ENCODE measurements at regions of chr11 and their contacts with region 1.

Region 1: DNA sequence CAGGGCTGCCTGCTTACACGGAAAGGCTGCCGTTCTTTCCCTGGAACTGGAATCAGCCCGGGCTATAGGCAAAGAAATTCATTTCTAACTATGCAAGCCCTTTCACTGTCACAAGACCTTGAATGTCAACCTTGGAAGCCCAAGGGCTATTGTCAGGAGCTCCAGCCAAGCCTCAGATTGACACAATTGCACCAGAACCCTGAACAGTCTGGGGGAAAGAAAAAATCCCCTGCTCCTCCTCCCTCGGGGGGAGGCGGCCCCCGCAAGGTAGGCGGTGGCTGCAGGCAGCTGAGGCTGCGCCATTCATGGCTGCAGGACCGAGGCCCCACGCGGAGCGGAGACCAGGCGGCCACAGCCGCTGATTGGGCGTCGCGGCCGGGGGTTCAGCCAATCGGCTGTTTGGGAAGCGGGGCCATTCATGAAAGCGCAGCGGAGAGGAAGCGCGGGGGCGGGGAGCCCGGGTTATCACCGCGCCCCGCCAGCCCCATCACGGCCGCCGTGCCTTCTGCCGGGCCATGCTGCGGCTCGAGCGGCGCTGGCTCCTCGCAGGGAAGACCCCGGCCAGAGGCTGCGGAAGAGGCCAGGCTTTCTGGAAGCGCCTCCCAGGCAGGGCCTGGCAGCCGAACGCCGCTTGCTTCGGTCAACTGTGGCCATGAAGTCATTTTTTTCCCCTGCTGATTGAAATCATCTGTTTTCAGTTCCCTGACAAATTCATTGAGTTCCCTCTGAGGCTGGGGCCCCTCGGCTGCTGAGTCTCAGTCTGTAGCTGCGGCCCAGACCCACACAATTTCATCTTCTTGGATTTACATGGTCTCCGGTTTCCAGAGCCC is 38.1 kb upstream of the LINC01488 start:
- DNase-seq: peak; percentile 88
- ATAC-seq: peak; percentile 89
- H3K4me3 Mint-ChIP-seq: peak overlapping the region; percentile 48
- H3K27ac Mint-ChIP-seq: peak overlapping the region; percentile 14
- H3K4me1 Mint-ChIP-seq: peaks cover 16% of the 10 kb centered on the region
- H3K27me3 Mint-ChIP-seq: peaks cover 13% of the 10 kb centered on the region

Region 2: GRCh38 chr11:69101115-69101791 is 342.1 kb before region 1 on chr11:
- CTCF ChIA-PET with region 1: no interaction called
- POLR2A ChIA-PET with region 1: no interaction called
- intact Hi-C with region 1: loop called in 1 of 2 experiments (anchors 1 kb)
- DNase-seq: peak; percentile 85
- ATAC-seq: peak; percentile 93
- H3K4me3 Mint-ChIP-seq: no peak overlapping the region
- H3K27ac Mint-ChIP-seq: no peak overlapping the region
- H3K4me1 Mint-ChIP-seq: peaks cover 2% of the 10 kb centered on the region
- H3K27me3 Mint-ChIP-seq: no peaks in the 10 kb centered on the region

Region 3: GRCh38 chr11:69145062-69145405 is 298.3 kb before region 1 on chr11:
- CTCF ChIA-PET with region 1: no interaction called
- POLR2A ChIA-PET with region 1: no interaction called
- intact Hi-C with region 1: no loop called
- DNase-seq: no peak
- ATAC-seq: no peak
- H3K4me3 Mint-ChIP-seq: no peak overlapping the region
- H3K27ac Mint-ChIP-seq: peak overlapping the region; percentile 69
- H3K4me1 Mint-ChIP-seq: peaks cover 17% of the 10 kb centered on the region
- H3K27me3 Mint-ChIP-seq: peaks cover 2% of the 10 kb centered on the region

Region 4: DNA sequence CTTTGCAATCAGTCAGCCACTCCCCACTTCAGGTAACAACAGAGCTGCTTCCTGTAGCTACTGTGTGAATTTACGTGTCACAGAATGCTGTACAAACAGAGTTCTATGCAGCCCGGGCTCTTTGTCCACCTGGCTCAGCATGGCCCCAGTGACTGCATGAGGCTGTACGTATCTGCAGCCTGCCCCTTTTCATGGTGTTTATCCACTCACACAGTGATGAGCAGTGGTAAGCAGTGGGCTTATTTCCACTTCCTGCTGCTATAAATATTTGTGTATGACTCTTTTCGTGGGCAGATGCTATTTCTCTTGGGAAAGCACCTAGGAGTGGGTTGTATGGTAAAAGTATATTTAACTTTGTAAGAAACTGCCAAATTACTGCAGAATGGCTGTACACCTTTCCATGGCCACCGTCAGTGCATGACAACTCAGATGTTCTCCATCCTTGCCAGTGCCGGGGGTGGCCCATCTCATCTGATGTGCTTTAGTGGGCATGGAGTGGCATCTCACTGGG is 106.1 kb before region 1 on chr11:
- CTCF ChIA-PET with region 1: no interaction called
- POLR2A ChIA-PET with region 1: no interaction called
- intact Hi-C with region 1: no loop called
- DNase-seq: peak; percentile 63
- ATAC-seq: peak; percentile 87
- H3K4me3 Mint-ChIP-seq: peak overlapping the region; percentile 15
- H3K27ac Mint-ChIP-seq: peak overlapping the region; percentile 70
- H3K4me1 Mint-ChIP-seq: peaks cover 36% of the 10 kb centered on the region
- H3K27me3 Mint-ChIP-seq: no peaks in the 10 kb centered on the region

Region 5: DNA sequence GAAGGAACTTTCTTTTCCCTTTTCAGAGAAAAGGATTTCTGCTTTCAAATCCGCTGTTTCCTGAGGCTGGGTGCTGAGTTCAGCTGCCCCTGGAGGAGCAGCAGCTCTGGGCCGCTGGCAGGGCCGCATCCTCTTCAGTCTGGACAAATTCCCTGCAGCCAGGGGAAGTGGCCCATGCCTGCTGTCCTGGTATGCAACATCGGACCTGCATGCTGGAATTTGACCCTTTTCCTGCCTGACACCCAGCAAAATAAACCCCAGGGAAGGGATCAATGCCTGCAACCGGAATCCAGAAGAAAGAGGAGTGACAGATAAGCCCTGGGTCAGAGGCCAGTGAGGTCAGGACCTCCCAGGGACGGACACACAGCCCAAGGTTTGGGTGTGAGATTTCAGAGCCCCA is 16.0 kb before region 1 on chr11:
- CTCF ChIA-PET with region 1: no interaction called
- POLR2A ChIA-PET with region 1: no interaction called
- intact Hi-C with region 1: loop called in 1 of 2 experiments (anchors 1 kb)
- DNase-seq: no peak
- ATAC-seq: no peak
- H3K4me3 Mint-ChIP-seq: no peak overlapping the region
- H3K27ac Mint-ChIP-seq: no peak overlapping the region
- H3K4me1 Mint-ChIP-seq: peaks cover 13% of the 10 kb centered on the region
- H3K27me3 Mint-ChIP-seq: peaks cover 9% of the 10 kb centered on the region

Region 6: GRCh38 chr11:69662017-69662698 is 218.8 kb after region 1 on chr11:
- CTCF ChIA-PET with region 1: no interaction called
- POLR2A ChIA-PET with region 1: no interaction called
- intact Hi-C with region 1: no loop called
- DNase-seq: no peak
- ATAC-seq: no peak
- H3K4me3 Mint-ChIP-seq: no peak overlapping the region
- H3K27ac Mint-ChIP-seq: no peak overlapping the region
- H3K4me1 Mint-ChIP-seq: no peaks in the 10 kb centered on the region
- H3K27me3 Mint-ChIP-seq: no peaks in the 10 kb centered on the region

Region 7: GRCh38 chr11:69972351-69972802 is 529.0 kb after region 1 on chr11:
- CTCF ChIA-PET with region 1: no interaction called
- POLR2A ChIA-PET with region 1: no interaction called
- intact Hi-C with region 1: no loop called
- DNase-seq: peak; percentile 31
- ATAC-seq: peak; percentile 55
- H3K4me3 Mint-ChIP-seq: no peak overlapping the region
- H3K27ac Mint-ChIP-seq: no peak overlapping the region
- H3K4me1 Mint-ChIP-seq: peaks cover 14% of the 10 kb centered on the region
- H3K27me3 Mint-ChIP-seq: peaks cover 8% of the 10 kb centered on the region